Prostate gland (tissue), 2 donors: ENCODE measurements at regions of chr16 and their contacts with region 1.

Region 1: DNA sequence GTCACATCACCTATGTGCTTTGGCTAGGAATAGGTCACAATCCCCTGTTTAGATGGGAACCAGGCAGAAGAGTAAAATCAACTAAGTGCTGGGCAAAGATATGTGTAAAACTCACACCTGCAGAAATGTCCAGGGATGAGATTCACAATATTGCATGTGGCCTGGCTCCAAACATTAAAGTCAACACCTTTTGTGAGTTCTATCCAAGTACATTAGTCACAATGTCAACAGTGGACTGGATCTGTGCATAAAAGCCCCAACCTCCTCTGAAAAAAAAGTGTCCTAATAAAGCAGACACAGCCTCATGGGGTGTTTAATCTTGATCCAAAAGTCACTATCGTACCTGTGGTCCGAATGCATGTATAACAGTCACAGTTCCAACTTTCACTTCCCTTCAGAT is 1990.3 kb downstream of the TP53TG3F start:
- DNase-seq: peak; percentile 51
- H3K4me3 ChIP-seq: no peak overlapping the region
- H3K27ac ChIP-seq: no peak overlapping the region
- H3K4me1 ChIP-seq: no peaks in the 10 kb centered on the region
- H3K27me3 ChIP-seq: no peaks in the 10 kb centered on the region
- CTCF ChIP-seq: no peak
- POLR2A ChIP-seq: no peak

Region 2: GRCh38 chr16:35386613-35387012 is 63.0 kb before region 1 on chr16:
- intact Hi-C with region 1: loop called (anchors 10 kb)
- DNase-seq: no peak
- H3K4me3 ChIP-seq: no peak overlapping the region
- H3K27ac ChIP-seq: no peak overlapping the region
- H3K4me1 ChIP-seq: no peaks in the 10 kb centered on the region
- H3K27me3 ChIP-seq: no peaks in the 10 kb centered on the region
- CTCF ChIP-seq: no peak
- POLR2A ChIP-seq: no peak

Region 3: GRCh38 chr16:35713762-35714650 is 264.3 kb after region 1 on chr16:
- intact Hi-C with region 1: no loop called
- DNase-seq: no peak
- H3K4me3 ChIP-seq: no peak overlapping the region
- H3K27ac ChIP-seq: no peak overlapping the region
- H3K4me1 ChIP-seq: no peaks in the 10 kb centered on the region
- H3K27me3 ChIP-seq: no peaks in the 10 kb centered on the region
- CTCF ChIP-seq: no peak
- POLR2A ChIP-seq: no peak